ENCODE measurements at regions of chr13 and their contacts with region 1.

Region 1: GRCh38 chr13:40653527-40654318 is 12.7 kb downstream of the FOXO1 start:
- DNase-seq: no peak
- ATAC-seq: peak; percentile 7
- H3K4me3 Mint-ChIP-seq: peak overlapping the region; percentile 64
- H3K27ac Mint-ChIP-seq: peak overlapping the region; percentile 100
- H3K4me1 Mint-ChIP-seq: peaks cover 92% of the 10 kb centered on the region
- H3K27me3 Mint-ChIP-seq: no peaks in the 10 kb centered on the region
- CTCF ChIP-seq: no peak

Region 2: DNA sequence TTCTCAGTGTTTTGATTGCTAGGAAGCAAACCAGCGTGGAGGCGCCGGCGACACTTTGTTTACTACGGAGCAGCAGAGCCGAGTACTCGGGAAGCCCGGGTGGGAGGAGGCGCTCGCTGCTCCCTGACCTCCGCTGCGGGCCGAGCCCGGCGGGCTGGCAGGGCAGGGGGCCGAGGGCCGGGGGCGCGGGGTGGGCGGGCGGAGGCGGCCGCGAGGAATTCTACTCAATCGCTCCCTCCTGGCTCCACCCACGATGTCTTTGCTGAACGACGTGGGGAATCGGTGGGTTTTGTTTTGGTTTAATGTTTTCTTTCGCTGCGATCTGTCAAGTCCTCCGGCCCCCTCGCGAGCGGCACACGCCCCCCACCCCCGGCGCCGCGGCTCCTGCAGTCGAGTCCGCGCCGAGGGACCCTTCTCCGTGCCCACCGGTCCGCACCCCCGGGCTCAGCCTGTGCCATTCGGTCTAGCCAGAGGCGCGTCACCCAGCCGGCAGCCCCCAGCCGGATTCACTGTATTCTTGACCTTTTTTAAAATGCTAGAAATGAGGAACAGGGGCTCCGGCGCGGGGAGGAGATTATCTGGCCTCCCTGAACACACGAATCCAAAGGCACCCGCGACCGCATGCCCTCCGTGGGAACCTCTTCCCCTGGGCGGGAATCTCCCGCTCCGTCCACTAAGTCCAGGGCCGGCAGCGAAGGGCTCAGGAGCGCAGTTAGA is 13.3 kb after region 1 on chr13:
- CTCF ChIA-PET with region 1: interaction called, 11 read pairs
- POLR2A ChIA-PET with region 1: interaction called, 3 read pairs
- DNase-seq: peak; percentile 59
- ATAC-seq: peak; percentile 38
- H3K4me3 Mint-ChIP-seq: peak overlapping the region; percentile 89
- H3K27ac Mint-ChIP-seq: peak overlapping the region; percentile 85
- H3K4me1 Mint-ChIP-seq: peaks cover 62% of the 10 kb centered on the region
- H3K27me3 Mint-ChIP-seq: peaks cover 4% of the 10 kb centered on the region; the same call in 1 of the 2 replicates
- CTCF ChIP-seq: no peak